ENCODE measurements at regions of chr12 and their contacts with region 1.

Region 1: GRCh38 chr12:66066137-66066928 is 64.2 kb downstream of the LLPH start:
- DNase-seq: no peak
- CTCF ChIP-seq: peak; percentile 24

Region 2: DNA sequence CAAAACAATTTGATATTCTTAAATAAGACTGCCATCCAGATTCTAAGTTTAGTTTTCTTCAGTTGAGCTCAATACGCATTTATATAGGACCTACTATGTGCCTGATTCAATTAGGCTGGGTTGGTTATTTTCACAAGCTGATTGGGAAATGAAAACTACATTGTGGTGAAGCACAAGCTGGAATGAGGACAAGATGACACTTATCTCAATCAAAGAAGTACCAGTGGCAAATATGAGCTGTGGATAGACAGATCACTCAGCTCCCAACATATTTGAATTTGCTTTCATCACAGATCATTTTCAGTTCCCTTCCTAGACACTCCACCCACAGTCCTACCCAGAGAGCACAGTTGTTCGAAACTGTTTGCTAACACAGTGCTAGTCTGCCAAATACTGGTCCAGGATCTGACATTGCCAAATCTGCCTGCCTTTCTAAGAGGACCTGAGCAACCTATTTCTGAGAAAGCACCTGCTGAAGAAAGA is 10.5 kb before region 1 on chr12:
- CTCF ChIA-PET with region 1: interaction called, 15 read pairs
- POLR2A ChIA-PET with region 1: no interaction called
- DNase-seq: peak; percentile 64
- CTCF ChIP-seq: no peak